ENCODE measurements at regions of chr11 and their contacts with region 1.

Region 1: GRCh38 chr11:11230802-11231562 is 122.1 kb downstream of the CSNK2A3 start:
- DNase-seq: no peak
- H3K4me3 ChIP-seq: no peak overlapping the region
- H3K27ac ChIP-seq: peak overlapping the region in 1 of 4 donors; percentile 30
- H3K4me1 ChIP-seq: peaks cover 0 to 18% (median 0%) of the 10 kb centered on the region in 4 donors
- H3K27me3 ChIP-seq: no peaks in the 10 kb centered on the region
- CTCF ChIP-seq: peak in 1 of 4 experiments; percentile 21
- EP300 ChIP-seq: no peak
- POLR2A ChIP-seq: no peak

Region 2: DNA sequence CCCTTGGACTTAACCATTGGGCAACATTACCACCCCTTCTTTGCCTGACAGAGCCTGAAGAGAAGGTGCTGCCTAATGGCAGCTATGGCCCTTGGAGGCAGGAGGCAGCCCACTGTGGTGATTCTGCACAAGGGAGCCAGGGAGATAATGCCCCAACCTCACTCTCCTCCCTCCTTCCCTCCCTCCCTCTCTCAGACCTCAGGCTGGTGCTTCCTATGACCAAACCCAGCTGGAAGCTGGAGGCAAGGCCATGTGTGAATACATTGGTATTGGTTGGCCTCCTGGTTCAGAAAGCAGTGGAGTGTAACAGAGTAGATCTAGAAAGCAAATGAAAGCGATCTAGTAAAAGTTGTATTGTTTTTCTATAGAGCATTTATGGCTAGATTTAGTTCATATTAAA is 111.1 kb before region 1 on chr11:
- intact Hi-C with region 1: loop called (anchors 10 kb)
- DNase-seq: no peak
- H3K4me3 ChIP-seq: no peak overlapping the region
- H3K27ac ChIP-seq: no peak overlapping the region
- H3K4me1 ChIP-seq: no peaks in the 10 kb centered on the region
- H3K27me3 ChIP-seq: no peaks in the 10 kb centered on the region
- CTCF ChIP-seq: no peak
- EP300 ChIP-seq: no peak
- POLR2A ChIP-seq: no peak

Measured in sigmoid colon (tissue), 7 donors.